GM10248 (cell line): ENCODE measurements at regions of chr19 and their contacts with region 1.

Region 1: GRCh38 chr19:44770550-44771257 is 7.0 kb upstream of the CBLC start:
- DNase-seq: peak; percentile 99
- CTCF ChIP-seq: peak; percentile 78

Region 2: DNA sequence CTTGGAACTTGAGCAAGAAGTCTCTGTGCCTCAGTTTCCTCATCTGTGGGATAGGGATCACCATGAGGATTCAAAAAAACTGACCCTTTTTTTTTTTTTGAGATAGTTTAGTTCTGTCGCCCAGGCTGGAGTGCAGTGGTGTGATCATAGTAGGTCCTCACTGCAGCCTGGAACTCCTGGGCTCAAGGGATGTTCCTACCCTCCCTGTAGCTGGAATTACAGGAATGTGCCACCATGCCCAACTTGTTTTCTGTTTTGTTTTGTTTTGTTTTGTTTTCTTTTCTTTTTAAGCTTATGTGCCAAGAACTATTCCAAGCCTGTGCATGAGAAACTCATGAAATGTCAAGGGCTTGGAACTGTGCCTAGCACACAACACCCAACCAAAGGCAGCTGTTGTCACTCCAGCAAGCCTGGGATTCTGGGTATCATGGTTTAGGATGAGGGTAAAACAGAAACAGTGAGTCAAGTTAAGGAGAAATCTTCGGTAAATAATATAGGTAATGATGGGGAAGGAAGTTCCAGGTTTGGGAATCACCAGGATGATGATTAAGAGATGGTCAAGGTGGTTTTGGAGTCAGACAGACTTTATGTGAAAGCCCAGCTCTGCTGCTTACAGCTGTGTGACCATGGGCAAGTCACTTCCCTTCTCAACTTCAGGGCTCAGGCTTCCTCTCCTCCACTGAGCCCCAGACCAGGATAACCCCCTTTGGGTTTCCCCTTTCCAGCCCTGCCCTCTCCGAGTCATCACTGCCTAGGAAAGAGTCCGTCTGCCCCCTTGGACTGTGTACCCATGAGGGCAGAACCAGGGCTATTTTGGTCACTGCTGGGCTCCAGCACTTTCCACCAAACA is 122.1 kb before region 1 on chr19:
- CTCF ChIA-PET with region 1: interaction called, 103 read pairs
- POLR2A ChIA-PET with region 1: no interaction called
- DNase-seq: no peak
- CTCF ChIP-seq: no peak

Region 3: GRCh38 chr19:44689056-44689895 is 81.4 kb before region 1 on chr19:
- CTCF ChIA-PET with region 1: interaction called, 110 read pairs
- POLR2A ChIA-PET with region 1: no interaction called
- DNase-seq: peak; percentile 73
- CTCF ChIP-seq: peak; percentile 90

Region 4: DNA sequence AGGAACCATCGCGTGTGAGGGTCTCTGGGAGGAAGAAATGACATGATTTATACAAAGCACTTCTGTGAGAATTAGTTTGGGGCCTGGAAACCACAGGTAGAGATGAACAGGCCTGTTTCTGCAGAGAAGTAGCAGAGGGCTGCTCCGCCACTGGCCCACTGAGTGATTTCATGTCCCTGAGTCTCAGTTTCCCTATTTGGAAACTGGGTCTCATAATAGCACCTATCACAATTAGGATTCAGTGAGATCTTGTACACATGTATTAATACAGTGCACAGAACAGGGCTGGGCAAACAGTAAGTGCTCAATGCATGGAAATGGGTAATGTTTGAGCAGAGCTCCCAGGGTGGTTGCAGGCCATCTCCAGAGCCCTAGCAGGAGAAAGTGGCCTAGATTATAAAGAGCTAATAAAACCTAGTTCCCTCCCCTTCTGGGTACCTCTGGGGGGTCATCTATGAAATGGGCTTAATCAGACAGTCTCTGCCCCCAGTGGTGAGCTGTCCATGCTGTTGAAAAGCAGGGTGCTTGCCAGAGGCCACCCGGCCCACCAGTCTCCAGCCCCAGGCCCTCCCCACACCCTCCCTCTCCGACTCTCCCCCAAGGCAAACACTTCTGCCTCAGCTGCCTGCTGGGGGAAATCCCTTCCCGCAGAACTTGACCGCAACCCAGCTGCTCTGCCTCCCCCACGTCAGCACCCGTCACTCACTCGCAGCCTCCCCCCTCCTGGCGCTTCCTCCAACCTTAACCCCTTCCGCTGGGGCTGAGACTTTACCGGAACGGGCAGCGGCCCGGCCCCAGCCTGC is 17.7 kb before region 1 on chr19:
- CTCF ChIA-PET with region 1: interaction called, 40 read pairs
- POLR2A ChIA-PET with region 1: interaction called, 6 read pairs
- DNase-seq: peak; percentile 94
- CTCF ChIP-seq: no peak

Region 5: DNA sequence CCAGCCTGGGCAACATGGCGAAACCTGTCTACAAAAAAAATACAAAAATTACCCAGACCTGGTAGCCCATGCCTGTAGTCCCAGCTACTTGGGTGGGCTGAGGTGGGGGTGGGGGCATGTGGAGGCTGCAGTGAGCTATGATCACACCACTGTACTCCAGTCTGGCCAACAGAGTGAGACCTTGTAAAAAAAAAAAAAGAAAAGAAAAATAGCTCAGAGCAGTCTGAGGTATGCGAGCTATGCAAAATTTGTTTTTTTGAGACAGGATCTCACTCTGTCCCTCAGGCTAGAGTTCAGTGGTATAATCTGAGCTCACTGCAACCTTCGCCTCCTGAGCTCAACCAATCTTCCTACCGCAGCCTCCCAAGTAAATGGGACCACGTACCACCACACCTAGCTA is 113.2 kb after region 1 on chr19:
- CTCF ChIA-PET with region 1: no interaction called
- POLR2A ChIA-PET with region 1: no interaction called
- DNase-seq: no peak
- CTCF ChIP-seq: no peak

Region 6: DNA sequence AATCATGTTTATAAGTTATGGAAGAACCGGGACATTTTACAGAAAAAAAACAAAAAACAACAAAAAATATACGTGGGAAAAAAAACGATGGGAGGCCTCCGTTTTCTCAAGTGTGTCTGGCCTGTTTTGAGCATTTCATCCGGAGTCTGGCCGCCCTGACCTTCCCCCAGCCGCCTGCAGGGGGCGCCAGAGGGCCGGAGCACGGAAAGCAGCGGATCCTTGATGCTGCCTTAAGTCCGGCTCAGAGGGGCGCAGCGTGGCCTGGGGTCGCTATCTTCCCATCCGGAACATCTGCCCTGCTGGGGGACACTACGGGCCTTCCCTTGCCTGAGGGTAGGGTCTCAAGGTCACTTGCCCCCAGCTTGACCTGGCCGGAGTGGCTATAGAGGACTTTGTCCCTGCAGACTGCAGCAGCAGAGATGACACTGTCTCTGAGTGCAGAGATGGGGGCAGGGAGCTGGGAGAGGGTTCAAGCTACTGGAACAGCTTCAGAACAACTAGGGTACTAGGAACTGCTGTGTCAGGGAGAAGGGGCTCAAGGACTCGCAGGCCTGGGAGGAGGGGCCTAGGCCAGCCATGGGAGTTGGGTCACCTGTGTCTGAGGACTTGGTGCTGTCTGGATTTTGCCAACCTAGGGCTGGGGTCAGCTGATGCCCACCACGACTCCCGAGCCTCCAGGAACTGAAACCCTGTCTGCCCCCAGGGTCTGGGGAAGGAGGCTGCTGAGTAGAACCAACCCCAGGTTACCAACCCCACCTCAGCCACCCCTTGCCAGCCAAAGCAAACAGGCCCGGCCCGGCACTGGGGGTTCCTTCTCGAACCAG is 133.1 kb after region 1 on chr19:
- CTCF ChIA-PET with region 1: no interaction called
- POLR2A ChIA-PET with region 1: no interaction called
- DNase-seq: peak; percentile 87
- CTCF ChIP-seq: peak; percentile 97